ENCODE measurements at regions of chr12 and their contacts with region 1.

Region 1: DNA sequence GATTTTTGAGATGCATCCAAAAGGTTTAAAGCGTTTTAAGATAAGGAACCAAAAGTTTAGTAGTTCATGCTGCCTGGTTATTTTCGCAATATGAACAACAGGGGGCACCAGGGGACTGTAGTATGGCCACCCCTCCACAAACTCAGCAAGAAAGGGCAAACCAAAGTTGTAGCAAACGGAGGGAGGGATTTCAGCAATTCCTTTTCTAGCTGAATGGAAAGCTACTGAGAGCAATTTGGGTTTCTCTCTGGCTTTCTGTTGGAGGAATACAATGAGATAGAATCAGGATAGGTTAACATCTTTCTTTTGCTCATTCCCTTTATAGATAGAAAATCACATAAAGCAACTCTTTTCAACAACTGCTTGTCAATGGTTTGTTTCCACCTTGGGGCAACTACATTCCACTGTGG is 62.5 kb downstream of the DRAM1 start:
- DNase-seq: peak in 1 of 2 donors; percentile 25
- ATAC-seq: peak; percentile 42 to 74 (median 62)
- H3K4me3 ChIP-seq: no peak overlapping the region
- H3K27ac ChIP-seq: peak overlapping the region; percentile 61
- H3K4me1 ChIP-seq: no peaks in the 10 kb centered on the region
- H3K27me3 ChIP-seq: no peaks in the 10 kb centered on the region
- CTCF ChIP-seq: peak; percentile 70

Region 2: DNA sequence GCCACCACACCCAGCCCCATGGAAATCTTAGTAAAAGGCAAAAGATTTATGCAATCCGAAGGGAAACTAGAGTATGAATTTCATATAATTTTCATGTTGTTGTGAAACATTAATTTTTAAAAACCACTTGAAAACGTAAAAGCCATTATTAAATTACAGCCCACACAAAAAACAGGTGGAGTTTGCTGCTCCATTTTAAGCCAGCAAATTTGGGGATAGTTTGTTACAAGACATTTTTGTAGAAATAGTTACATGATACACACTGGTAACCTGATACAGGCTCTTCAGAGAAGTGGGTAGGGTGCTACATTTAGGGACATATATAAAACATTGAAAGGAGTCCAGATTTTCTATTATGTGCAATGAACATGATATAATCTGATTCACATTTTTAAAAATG is 126.7 kb before region 1 on chr12:
- intact Hi-C with region 1: no loop called
- DNase-seq: no peak
- ATAC-seq: no peak
- H3K4me3 ChIP-seq: no peak overlapping the region
- H3K27ac ChIP-seq: no peak overlapping the region
- H3K4me1 ChIP-seq: peaks cover 16% of the 10 kb centered on the region
- H3K27me3 ChIP-seq: no peaks in the 10 kb centered on the region
- CTCF ChIP-seq: no peak

Region 3: DNA sequence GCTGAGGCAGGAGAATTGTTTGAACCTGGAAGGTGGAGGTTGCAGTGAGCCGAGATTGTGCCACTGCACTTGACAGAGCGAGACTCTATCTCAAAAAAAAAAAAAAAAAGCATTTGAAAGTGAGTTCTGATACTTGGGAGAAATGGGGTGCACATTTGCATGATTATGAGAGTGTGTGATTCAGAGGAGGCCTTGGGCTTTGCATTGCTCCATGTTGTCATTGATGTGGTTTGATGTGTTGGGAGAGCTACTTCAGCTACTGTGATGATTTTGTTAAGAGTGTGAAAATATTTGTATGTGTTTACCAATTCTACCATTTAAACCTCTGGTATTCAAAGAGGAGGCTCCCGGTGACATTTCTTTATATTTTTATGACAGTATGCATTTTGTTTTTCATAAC is 38.1 kb before region 1 on chr12:
- intact Hi-C with region 1: no loop called
- DNase-seq: no peak
- ATAC-seq: no peak
- H3K4me3 ChIP-seq: no peak overlapping the region
- H3K27ac ChIP-seq: no peak overlapping the region
- H3K4me1 ChIP-seq: no peaks in the 10 kb centered on the region
- H3K27me3 ChIP-seq: no peaks in the 10 kb centered on the region
- CTCF ChIP-seq: no peak

Region 4: GRCh38 chr12:102119674-102120563 is 180.1 kb after region 1 on chr12 and contains the starts of genes NUP37 and PARPBP:
- intact Hi-C with region 1: loop called in 1 of 2 experiments (anchors 10 kb)
- DNase-seq: peak; percentile 90 to 95
- ATAC-seq: peak; percentile 100
- H3K4me3 ChIP-seq: peak within 1 kb of the TSS; percentile 91
- H3K27ac ChIP-seq: peak within 1 kb of the TSS; percentile 92
- H3K4me1 ChIP-seq: peaks cover 18% of the 10 kb centered on the region
- H3K27me3 ChIP-seq: no peaks in the 10 kb centered on the region
- CTCF ChIP-seq: peak; percentile 6
- total RNA-seq, gene NUP37: 12.5 to 20.7 (median 17.4) TPM
- total RNA-seq, gene PARPBP: 0.60 to 0.76 (median 0.70) TPM

Region 5: GRCh38 chr12:102281231-102281630 is 341.4 kb after region 1 on chr12:
- intact Hi-C with region 1: loop called in 1 of 2 experiments (anchors 5 kb)
- DNase-seq: no peak
- ATAC-seq: no peak
- H3K4me3 ChIP-seq: no peak overlapping the region
- H3K27ac ChIP-seq: no peak overlapping the region
- H3K4me1 ChIP-seq: no peaks in the 10 kb centered on the region
- H3K27me3 ChIP-seq: no peaks in the 10 kb centered on the region
- CTCF ChIP-seq: no peak

Region 6: GRCh38 chr12:102769319-102769916 is 829.6 kb after region 1 on chr12:
- intact Hi-C with region 1: loop called (anchors 5 to 10 kb)
- DNase-seq: peak; percentile 39 to 58
- ATAC-seq: peak; percentile 57 to 90 (median 78)
- H3K4me3 ChIP-seq: no peak overlapping the region
- H3K27ac ChIP-seq: no peak overlapping the region
- H3K4me1 ChIP-seq: no peaks in the 10 kb centered on the region
- H3K27me3 ChIP-seq: no peaks in the 10 kb centered on the region
- CTCF ChIP-seq: peak; percentile 60